Activated CD8-positive, alpha-beta T cell treated with anti-CD3 and anti-CD28 coated beads, Interleukin-2, amount 10 ng/mL, durations not matched to agents 7 days and 5 days (primary cell): ENCODE measurements at regions of chr5 and their contacts with region 1.

Region 1: DNA sequence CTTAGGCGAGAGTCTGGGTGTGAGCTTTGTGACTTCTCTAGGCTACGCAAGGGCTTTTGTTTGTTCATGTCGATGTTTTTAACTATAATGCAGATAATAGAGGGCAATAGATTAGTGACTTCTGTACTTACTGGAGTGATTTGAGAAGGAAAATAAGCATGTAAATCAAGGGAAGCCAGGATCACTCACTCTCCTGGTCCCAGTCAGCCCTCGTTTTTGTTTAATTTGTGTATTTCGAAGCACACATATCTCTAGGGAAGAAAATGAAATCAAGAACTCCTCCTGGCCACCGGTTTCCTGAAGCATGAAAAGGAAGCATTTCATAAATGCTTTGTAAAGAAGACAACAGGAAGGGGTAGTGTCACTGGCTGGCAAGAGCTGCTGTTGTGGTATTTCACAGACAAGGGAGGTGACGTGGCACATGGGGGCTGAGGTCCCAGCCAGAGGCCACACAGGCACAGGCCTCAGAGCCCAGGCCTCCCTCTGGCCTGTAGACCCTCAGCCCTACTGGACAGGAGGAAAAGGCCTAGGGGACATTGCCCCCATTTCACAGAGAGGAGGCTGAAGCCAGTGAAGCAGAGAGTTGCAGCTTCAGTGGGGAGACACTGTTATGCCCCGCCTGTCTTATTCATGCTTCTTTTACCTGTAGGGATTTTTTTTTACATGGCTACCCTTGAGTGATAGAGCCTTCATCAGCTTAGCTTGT is 34.1 kb downstream of the IRF1 start:
- DNase-seq: peak; percentile 77
- ATAC-seq: peak; percentile 69
- H3K4me3 Mint-ChIP-seq: peak overlapping the region; percentile 63
- H3K27ac Mint-ChIP-seq: peak overlapping the region; percentile 99
- H3K4me1 Mint-ChIP-seq: peaks cover 91% of the 10 kb centered on the region
- H3K27me3 Mint-ChIP-seq: no peaks in the 10 kb centered on the region

Region 2: GRCh38 chr5:132419502-132420468 is 36.7 kb before region 1 on chr5:
- CTCF ChIA-PET with region 1: interaction called, 141 read pairs
- POLR2A ChIA-PET with region 1: interaction called, 137 read pairs
- DNase-seq: peak; percentile 76
- ATAC-seq: peak; percentile 64
- H3K4me3 Mint-ChIP-seq: peak overlapping the region; percentile 69
- H3K27ac Mint-ChIP-seq: peak overlapping the region; percentile 91
- H3K4me1 Mint-ChIP-seq: peaks cover 95% of the 10 kb centered on the region
- H3K27me3 Mint-ChIP-seq: no peaks in the 10 kb centered on the region

Region 3: DNA sequence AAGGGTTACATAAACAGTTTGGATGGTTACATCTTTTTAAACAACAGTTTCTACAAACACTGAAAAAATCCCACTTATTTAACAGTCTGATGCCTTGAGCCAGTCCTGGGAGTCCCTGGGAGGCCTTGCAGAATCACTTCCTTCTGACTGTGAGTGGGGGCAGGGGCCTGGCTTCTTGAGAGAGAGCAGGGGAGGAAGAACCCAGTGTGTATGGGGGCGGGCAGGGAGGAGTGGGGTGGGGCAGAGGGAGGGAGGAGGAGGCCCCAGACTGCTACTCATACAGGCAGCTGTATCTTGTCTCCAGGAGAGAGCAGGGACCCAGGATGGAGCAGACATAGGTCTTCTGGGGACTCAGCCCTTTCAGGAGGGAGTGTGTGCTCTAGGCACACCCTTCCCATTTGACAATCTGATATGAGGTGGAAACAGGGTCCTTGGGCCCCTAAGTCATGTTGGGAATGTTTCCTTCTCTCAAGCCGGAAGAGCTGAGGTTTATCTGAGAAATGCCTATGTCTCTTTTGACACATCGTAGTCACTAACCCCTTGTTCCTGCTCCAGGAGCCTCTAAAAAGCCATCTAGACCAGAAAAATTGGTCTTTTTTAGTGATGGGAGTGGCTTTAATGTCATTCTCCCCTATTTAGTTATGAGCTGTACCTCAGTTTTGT is 18.7 kb before region 1 on chr5:
- CTCF ChIA-PET with region 1: interaction called, 141 read pairs
- POLR2A ChIA-PET with region 1: interaction called, 32 read pairs
- DNase-seq: peak; percentile 84
- ATAC-seq: peak; percentile 94
- H3K4me3 Mint-ChIP-seq: peak overlapping the region; percentile 66
- H3K27ac Mint-ChIP-seq: peak overlapping the region; percentile 83
- H3K4me1 Mint-ChIP-seq: peaks cover 90% of the 10 kb centered on the region
- H3K27me3 Mint-ChIP-seq: no peaks in the 10 kb centered on the region

Region 4: GRCh38 chr5:132473019-132473531 is 16.6 kb after region 1 on chr5:
- CTCF ChIA-PET with region 1: interaction called, 114 read pairs
- POLR2A ChIA-PET with region 1: interaction called, 70 read pairs
- DNase-seq: peak; percentile 95
- ATAC-seq: peak; percentile 63
- H3K4me3 Mint-ChIP-seq: peak overlapping the region; percentile 42
- H3K27ac Mint-ChIP-seq: peak overlapping the region; percentile 94
- H3K4me1 Mint-ChIP-seq: peaks cover 92% of the 10 kb centered on the region
- H3K27me3 Mint-ChIP-seq: no peaks in the 10 kb centered on the region

Region 5: GRCh38 chr5:132490486-132491367 is 34.3 kb after region 1 on chr5 and contains the start of gene IRF1:
- CTCF ChIA-PET with region 1: interaction called, 22 read pairs
- POLR2A ChIA-PET with region 1: interaction called, 175 read pairs
- DNase-seq: peak; percentile 98
- ATAC-seq: peak; percentile 70
- H3K4me3 Mint-ChIP-seq: peak within 1 kb of the TSS; percentile 92
- H3K27ac Mint-ChIP-seq: peak within 1 kb of the TSS; percentile 97
- H3K4me1 Mint-ChIP-seq: peaks cover 68% of the 10 kb centered on the region
- H3K27me3 Mint-ChIP-seq: no peaks in the 10 kb centered on the region
- total RNA-seq, gene IRF1: 221 to 228 TPM